Right ventricle myocardium inferior (tissue), 1 donor: ENCODE measurements at regions of chr9 and their contacts with region 1.

Region 1: GRCh38 chr9:136060234-136060948 is 34.7 kb downstream of the NACC2 start:
- DNase-seq: peak; percentile 32
- ATAC-seq: no peak

Region 2: DNA sequence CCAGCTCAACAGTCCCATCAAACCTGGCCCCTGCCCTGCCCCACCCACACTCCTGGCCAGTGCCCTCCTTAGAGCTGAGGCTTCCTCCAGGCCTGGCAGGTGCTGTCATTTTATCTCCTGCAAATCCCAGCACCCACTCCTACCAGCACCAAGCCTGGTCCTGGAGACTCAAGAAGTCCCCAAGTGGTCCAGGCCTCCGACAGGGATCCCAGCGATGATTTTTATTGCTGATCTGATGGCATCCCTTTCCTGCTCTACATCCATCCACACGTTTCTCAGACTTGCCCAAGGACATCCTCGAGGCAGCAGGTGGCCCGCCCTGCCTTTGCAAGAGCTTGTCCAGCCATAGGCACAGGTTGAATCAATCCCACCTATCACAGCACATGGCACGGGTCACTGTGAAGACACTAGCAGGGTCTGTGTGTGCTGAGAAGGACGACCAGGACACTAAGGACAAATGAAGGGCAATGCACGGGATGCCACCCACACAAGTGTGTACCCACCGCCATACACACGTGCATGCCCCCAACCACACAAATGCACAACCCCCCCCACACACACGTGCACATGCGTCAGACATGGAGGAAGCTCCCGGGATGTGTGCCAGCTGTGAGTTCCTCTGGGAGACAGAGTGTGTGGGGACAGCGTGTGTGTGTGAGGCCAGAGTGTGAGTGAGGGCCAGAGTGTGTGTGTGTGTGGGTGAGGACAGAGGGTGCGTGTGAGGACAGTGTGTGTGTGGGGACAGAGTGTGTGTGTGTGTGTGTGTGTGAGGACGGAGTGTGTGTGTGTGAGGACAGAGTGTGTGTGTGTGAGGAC is 36.8 kb before region 1 on chr9:
- intact Hi-C with region 1: loop called (anchors 5 kb)
- DNase-seq: peak; percentile 88
- ATAC-seq: peak; percentile 75

Region 3: GRCh38 chr9:136107155-136107952 is 47.0 kb after region 1 on chr9:
- intact Hi-C with region 1: no loop called
- DNase-seq: no peak
- ATAC-seq: no peak

Region 4: DNA sequence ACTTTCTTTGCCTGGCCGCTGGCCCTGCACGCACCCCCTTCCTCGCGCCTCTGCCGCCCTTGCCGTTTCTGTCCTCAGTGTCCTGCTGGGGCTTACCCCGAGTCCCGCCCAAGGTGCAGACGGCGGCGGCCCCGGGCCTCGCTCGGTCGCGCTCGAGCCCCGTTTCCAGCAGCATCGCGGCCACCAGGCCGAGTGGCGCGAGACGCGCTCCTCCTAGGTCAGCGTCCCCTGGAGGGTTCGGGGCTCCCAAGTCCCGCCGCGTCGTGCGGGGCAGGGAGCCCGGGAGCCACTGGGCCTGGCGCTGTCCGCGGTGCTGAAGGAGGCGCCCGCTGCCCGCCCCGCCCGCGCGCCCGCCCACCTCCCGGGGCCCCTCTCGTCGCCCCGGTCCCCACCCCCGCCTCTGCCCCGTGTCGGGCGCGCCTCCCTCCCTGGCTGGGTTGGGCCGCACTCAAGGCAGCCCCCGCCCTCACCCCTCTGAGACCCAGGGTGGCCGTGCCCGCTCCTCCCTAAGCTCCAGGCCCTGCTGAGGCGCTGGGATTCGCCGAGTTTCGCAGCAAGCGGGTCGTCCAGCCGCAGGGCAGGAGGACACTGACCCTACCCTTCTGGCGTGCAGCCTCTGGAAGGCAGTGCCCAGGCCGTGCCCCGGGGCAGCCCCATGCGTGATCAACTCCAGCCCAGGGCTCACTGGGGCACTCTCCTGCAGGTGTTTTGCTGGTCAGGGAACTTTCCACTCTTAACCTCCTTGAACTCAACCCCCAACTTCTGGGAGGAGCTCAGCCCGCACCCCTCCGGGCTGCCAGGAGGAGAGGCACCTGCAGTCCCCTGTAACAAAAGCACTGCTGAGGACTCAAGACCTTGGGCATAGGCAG is 144.7 kb after region 1 on chr9 and contains the start of gene LHX3:
- intact Hi-C with region 1: no loop called
- DNase-seq: peak; percentile 67
- ATAC-seq: peak; percentile 38
- total RNA-seq, gene LHX3: not detected

Region 5: DNA sequence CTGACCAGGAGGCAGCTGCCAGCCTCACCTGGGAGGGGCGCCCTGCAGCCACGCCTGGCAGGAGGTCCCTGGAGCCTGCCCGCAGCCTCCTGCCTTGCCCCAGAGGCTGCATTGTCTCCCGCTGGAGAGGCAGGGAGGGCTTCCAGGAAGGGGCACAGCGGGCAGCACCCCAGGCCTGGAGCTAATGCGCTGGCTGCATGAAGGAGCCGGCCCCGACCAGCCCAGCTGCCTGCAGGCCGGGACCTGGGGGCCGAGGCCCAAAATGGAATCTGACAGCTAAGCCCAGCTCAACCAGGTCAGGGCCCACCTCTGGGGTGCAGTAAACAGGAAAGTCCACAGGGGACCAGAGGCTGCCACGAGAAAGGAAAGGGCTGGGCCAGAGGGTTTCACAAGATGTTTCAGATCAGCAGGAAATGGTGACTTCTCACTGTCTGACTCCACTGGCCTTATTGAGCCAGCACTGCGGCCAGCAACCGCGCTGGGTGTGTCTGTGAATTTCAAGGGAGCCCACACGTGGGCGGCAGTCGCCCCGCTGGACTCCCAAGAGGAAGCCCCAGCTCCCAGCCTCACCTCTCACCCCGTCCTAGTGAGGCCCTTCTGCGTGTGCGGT is 504.1 kb after region 1 on chr9:
- intact Hi-C with region 1: no loop called
- DNase-seq: peak; percentile 94
- ATAC-seq: peak; percentile 63